SK-N-SH (cell line): ENCODE measurements at regions of chr19 and their contacts with region 1.

Region 1: GRCh38 chr19:35869327-35870123 is 1.2 kb downstream of the APLP1 start:
- DNase-seq: peak; percentile 89
- H3K4me3 ChIP-seq: peak overlapping the region; percentile 52 to 60
- H3K27ac ChIP-seq: peak overlapping the region in 1 of 2 experiments; percentile 75; a peak in 2 of 4 replicates
- H3K4me1 ChIP-seq: peaks cover 7 to 11% of the 10 kb centered on the region in 2 experiments; a peak in 2 of 4 replicates
- H3K27me3 ChIP-seq: no peaks in the 10 kb centered on the region
- CTCF ChIP-seq: no peak
- EP300 ChIP-seq: no peak
- RAD21 ChIP-seq: no peak

Region 2: GRCh38 chr19:35882114-35882832 is 12.7 kb after region 1 on chr19:
- CTCF ChIA-PET with region 1: interaction called, 18 read pairs
- POLR2A ChIA-PET with region 1: interaction called, 5 read pairs
- DNase-seq: peak; percentile 79
- H3K4me3 ChIP-seq: no peak overlapping the region
- H3K27ac ChIP-seq: no peak overlapping the region
- H3K4me1 ChIP-seq: no peaks in the 10 kb centered on the region; a peak in 1 of 4 replicates
- H3K27me3 ChIP-seq: no peaks in the 10 kb centered on the region
- CTCF ChIP-seq: peak; percentile 61
- EP300 ChIP-seq: no peak
- RAD21 ChIP-seq: peak; percentile 87

Region 3: DNA sequence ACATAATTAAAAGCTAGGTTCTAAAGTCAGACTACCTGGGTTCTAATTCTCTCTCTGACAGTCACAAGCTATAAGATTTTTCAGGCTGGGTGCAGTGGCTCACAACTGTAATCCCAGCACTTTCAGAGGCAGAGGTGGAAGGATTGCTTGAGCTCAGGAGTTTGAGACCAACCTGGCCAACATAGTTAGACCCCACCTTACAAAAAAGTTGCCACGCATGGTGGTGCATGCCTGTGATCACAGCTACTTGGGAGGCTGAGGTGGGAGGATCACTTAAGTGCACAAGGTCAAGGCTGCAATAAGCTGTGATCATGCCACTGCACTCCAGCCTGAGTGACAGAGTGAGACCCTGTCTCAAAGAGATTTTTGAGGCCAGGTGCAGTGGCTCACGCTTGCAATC is 24.8 kb after region 1 on chr19:
- CTCF ChIA-PET with region 1: no interaction called
- POLR2A ChIA-PET with region 1: no interaction called
- DNase-seq: no peak
- H3K4me3 ChIP-seq: no peak overlapping the region
- H3K27ac ChIP-seq: no peak overlapping the region
- H3K4me1 ChIP-seq: peaks cover 4 to 5% of the 10 kb centered on the region in 2 experiments; a peak in 1 of 4 replicates
- H3K27me3 ChIP-seq: no peaks in the 10 kb centered on the region
- CTCF ChIP-seq: no peak
- EP300 ChIP-seq: no peak
- RAD21 ChIP-seq: no peak